Dorsolateral prefrontal cortex (tissue), 120 donors: ENCODE measurements at regions of chr17 and their contacts with region 1.

Region 1: GRCh38 chr17:4366327-4367063 is at the start of gene UBE2G1:
- DNase-seq: peak; percentile 94 to 99 (median 97)
- H3K4me3 ChIP-seq: peak within 1 kb of the TSS; percentile 67 to 100 (median 94)
- H3K27ac ChIP-seq: peak within 1 kb of the TSS; percentile 86 to 99 (median 96)
- H3K27me3 ChIP-seq: no peaks in the 10 kb centered on the region
- CTCF ChIP-seq: peak in 45 of 56 donors; percentile 13 to 63 (median 38)
- total RNA-seq, gene UBE2G1: 43.4 to 73.4 (median 57.3) TPM

Region 2: DNA sequence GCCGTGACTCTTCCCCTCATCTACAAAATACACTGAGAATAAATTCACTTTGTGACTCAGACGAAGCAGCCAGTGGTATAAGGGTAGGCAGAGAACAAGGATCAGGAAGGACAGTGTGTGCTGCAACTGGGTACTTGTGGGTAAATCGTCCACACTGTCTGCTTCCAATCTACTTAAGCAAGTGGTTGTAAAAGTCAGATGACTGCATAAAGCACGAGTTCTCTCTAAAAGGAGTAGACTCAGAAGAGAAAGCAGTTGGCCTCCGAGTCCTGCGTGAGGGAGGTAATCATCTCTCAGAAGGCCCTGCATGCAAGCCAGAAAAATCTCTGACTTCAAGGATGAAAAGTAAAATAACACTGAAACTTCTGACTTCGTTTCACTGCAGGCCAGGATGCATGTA is 145.8 kb before region 1 on chr17:
- intact Hi-C with region 1: loop called (anchors 2 to 5 kb)
- DNase-seq: no peak
- H3K4me3 ChIP-seq: peak overlapping the region in 2 of 59 donors; percentile 10 to 23
- H3K27ac ChIP-seq: peak overlapping the region in 34 of 59 donors; percentile 2 to 69 (median 38)
- H3K27me3 ChIP-seq: no peaks in the 10 kb centered on the region
- CTCF ChIP-seq: no peak

Region 3: DNA sequence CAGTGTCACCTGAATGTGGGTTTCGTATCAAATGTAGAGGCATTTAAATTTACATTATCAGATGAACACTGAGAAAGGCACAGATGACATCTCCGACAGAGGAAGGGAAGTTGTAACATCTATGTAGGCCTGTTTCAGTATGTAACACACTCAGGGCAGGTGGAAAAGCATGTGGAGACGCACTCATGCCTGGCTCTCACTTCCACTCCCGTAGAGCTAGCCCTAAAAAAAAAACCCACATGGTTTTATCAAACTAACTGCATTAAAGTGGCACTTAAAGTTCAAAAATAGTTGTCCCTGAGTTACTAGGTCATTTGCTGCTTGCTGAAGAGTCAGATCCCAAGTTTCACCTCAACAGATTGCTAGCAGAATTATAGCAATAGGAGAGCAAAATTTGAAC is 96.6 kb before region 1 on chr17:
- intact Hi-C with region 1: loop called in 1 of 2 experiments (anchors 5 kb)
- DNase-seq: no peak
- H3K4me3 ChIP-seq: no peak overlapping the region
- H3K27ac ChIP-seq: peak overlapping the region in 22 of 59 donors; percentile 1 to 63 (median 26)
- H3K27me3 ChIP-seq: no peaks in the 10 kb centered on the region
- CTCF ChIP-seq: no peak

Region 4: GRCh38 chr17:4310349-4311060 is 56.0 kb before region 1 on chr17:
- intact Hi-C with region 1: loop called in 1 of 2 experiments (anchors 2 kb)
- DNase-seq: peak; percentile 16 to 71 (median 43)
- H3K4me3 ChIP-seq: peak overlapping the region in 26 of 59 donors; percentile 3 to 46 (median 15)
- H3K27ac ChIP-seq: peak overlapping the region in 58 of 59 donors; percentile 2 to 90 (median 78)
- H3K27me3 ChIP-seq: no peaks in the 10 kb centered on the region
- CTCF ChIP-seq: peak in 1 of 56 donors; percentile 6

Region 5: DNA sequence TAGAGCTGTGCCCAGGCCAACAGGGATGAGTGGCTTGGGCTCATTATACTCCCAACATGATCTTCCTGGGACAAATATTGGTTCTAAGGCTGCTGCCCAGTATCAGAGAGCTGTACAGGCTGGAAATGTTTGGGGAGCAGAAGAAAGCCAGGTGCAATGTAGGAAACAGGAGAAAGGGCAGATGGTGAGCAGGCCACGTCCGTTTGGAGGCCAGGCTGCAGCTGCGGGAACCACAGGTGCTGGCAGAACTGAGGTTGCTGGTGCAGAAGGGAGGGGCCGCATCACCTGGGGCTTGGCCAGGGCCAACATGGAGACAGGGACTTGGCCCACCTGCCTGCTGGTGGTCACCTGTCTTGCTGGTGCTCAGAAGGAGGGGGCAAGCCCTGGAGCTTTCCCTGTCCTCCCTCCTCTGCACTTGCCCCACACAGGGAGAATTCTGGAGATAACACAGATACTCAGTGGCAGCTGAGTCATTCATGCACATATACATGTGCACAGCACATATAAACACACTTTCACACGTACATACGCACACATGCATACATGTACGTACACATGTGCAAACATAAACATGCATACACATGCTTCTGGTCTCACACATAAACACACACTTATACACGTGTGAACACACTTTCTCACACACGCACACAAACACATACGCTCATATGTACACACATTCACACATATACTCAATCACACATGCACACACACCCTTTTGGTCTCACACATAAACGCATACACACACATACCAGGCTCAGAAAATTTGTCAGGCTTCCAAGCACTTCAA is 1771.4 kb after region 1 on chr17:
- intact Hi-C with region 1: no loop called
- DNase-seq: peak in 1 of 10 donors; percentile 59
- H3K4me3 ChIP-seq: no peak overlapping the region
- H3K27ac ChIP-seq: no peak overlapping the region
- H3K27me3 ChIP-seq: peaks cover 0 to 10% (median 0%) of the 10 kb centered on the region in 45 donors
- CTCF ChIP-seq: no peak